ENCODE measurements at regions of chr15 and their contacts with region 1.

Region 1: GRCh38 chr15:73927476-73928240 is 1.4 kb downstream of the LOXL1 start:
- DNase-seq: peak; percentile 68
- H3K4me3 Mint-ChIP-seq: peak overlapping the region; percentile 77
- H3K27ac Mint-ChIP-seq: peak overlapping the region; percentile 11
- H3K4me1 Mint-ChIP-seq: peaks cover 39% of the 10 kb centered on the region
- H3K27me3 Mint-ChIP-seq: peaks cover 9% of the 10 kb centered on the region

Region 2: GRCh38 chr15:73573572-73573971 is 354.1 kb before region 1 on chr15:
- intact Hi-C with region 1: loop called (anchors 10 kb)
- DNase-seq: no peak
- H3K4me3 Mint-ChIP-seq: no peak overlapping the region
- H3K27ac Mint-ChIP-seq: no peak overlapping the region
- H3K4me1 Mint-ChIP-seq: peaks cover 71% of the 10 kb centered on the region
- H3K27me3 Mint-ChIP-seq: no peaks in the 10 kb centered on the region

Region 3: DNA sequence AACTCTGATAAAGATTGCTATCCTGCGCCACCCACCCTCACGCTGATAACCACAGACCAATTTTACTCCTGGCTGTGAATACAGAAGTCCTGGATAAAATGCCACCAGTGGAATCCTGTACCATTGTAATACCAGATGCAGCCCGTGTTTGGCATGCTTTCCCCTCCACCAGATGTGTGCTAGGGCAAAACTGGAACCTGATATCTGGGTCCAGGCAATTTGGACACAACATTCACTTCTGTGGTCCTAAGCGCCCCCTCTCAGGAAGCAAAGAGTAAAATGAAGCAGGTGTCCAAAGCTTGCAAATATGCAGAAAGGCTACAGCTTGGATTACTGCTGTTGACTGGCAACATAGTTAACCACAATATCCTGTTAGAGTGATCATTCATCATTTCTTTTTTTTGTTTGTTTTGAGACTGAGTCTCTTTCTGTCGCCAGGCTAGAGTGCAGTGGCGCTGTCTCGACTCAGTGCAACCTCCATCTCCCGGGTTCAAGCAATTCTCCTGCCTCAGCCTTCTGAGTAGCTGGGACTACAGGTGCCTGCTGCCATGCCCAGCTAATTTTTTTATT is 31.4 kb after region 1 on chr15:
- intact Hi-C with region 1: loop called (anchors 1 kb)
- DNase-seq: no peak
- H3K4me3 Mint-ChIP-seq: peak overlapping the region; percentile 36
- H3K27ac Mint-ChIP-seq: peak overlapping the region; percentile 40
- H3K4me1 Mint-ChIP-seq: peaks cover 37% of the 10 kb centered on the region
- H3K27me3 Mint-ChIP-seq: peaks cover 2% of the 10 kb centered on the region

Measured in activated T-helper 1 cell treated with anti-CD3 and anti-CD28 coated beads, Interleukin-12 subunit alpha, Interleukin-12 subunit beta, Interleukin-2, Interleukin-4 antibody, amounts not matched to agents 30 ng/mL and 10 ng/mL and 1 ng/mL, durations not matched to agents 14 hours and 24 hours and 36 hours (primary cell).